ENCODE measurements at regions of chr3 and their contacts with region 1.

Region 1: GRCh38 chr3:183895296-183895695 is 10.6 kb upstream of the PARL start:
- DNase-seq: peak; percentile 48 to 55
- H3K4me3 ChIP-seq: no peak overlapping the region
- H3K27ac ChIP-seq: no peak overlapping the region
- H3K4me1 ChIP-seq: no peaks in the 10 kb centered on the region
- H3K27me3 ChIP-seq: no peaks in the 10 kb centered on the region
- CTCF ChIP-seq: peak; percentile 97

Region 2: DNA sequence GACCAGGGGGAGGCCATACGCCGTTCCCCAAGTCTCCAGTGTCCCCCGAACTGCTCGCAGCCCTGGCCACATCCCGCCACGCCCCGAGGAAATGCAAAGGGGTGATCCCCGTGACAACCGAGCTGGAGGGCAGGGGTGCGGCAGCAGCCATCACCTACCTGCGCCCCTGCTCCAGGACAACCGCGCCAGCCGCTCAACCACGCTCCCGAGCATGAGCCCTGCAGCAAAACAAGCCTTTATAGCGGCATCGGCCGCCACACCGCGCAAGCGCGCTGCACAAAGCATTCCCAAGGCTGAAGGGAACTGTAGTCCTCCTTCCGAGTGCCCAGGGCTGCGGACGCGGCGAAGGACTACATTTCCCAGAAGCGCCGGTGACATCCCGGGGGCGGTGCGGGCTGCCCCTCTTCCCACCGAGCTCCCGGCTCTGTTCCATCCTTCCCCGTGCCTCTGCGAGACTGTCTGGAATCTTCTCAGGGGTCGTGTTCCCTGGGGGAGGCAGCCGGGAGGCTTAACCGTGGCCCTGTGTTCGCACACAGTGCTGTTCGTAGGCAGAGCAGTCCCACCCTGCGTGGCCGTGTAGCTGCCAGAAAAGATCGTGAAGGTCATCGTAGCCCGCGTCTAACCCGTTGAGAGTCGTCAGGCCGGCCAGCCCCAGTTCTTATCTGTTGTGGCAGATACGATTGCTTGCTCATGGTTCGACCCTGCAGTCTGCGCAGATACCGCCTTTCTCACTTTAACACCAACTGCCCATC is 122.6 kb after region 1 on chr3 and contains the start of gene ABCC5:
- CTCF ChIA-PET with region 1: interaction called, 5 read pairs
- POLR2A ChIA-PET with region 1: no interaction called
- intact Hi-C with region 1: loop called (anchors 1 kb)
- DNase-seq: peak; percentile 87 to 94
- H3K4me3 ChIP-seq: peak within 1 kb of the TSS; percentile 99
- H3K27ac ChIP-seq: peak within 1 kb of the TSS; percentile 58
- H3K4me1 ChIP-seq: peaks cover 34% of the 10 kb centered on the region
- H3K27me3 ChIP-seq: no peaks in the 10 kb centered on the region
- CTCF ChIP-seq: peak; percentile 83
- total RNA-seq, gene ABCC5: 133 and 151 TPM in 2 replicates

Region 3: DNA sequence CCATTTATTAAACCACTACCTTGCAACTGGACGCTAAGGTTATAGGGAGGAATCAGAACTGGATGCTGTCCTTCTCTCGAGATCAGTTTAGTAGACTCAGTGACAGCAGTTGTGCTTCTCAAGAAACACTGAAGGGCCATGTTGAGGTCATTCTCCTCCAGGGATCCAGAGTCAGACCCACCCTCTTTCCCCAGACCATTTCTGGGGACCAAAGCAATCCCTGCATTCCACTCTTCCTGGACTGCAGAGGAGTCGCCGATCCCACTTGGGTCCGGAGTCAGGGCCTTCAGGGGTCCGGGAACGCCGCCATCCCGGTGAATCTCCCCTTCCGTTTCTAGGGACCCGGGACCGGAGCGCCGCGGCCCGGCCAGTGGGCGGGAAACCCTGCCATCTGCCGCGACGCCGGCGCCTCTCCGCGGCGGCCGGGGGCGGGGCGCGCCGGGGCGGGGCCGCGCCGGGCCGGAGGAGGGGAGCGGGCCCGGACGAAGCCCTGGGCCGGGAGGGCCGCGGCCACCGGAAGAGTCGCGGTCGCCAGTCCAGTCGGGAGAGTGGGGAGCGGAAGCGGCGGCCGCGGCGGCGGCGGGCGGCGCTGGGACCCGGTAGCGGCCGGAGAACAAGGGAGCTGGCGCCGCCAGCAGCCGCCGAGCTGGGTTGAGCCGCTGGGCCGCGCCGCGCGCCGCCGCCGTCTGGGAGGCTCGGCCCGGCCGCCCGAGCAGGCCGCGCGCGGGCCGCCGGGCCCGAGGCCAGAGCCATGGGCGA is 259.8 kb after region 1 on chr3 and contains the start of gene DVL3:
- CTCF ChIA-PET with region 1: interaction called, 4 read pairs
- POLR2A ChIA-PET with region 1: no interaction called
- intact Hi-C with region 1: loop called (anchors 1 kb)
- DNase-seq: peak in 1 of 2 experiments; percentile 84
- H3K4me3 ChIP-seq: peak within 1 kb of the TSS; percentile 97
- H3K27ac ChIP-seq: peak within 1 kb of the TSS; percentile 63
- H3K4me1 ChIP-seq: peaks cover 26% of the 10 kb centered on the region
- H3K27me3 ChIP-seq: no peaks in the 10 kb centered on the region
- CTCF ChIP-seq: no peak
- total RNA-seq, gene DVL3: 101 and 108 TPM in 2 replicates

Region 4: DNA sequence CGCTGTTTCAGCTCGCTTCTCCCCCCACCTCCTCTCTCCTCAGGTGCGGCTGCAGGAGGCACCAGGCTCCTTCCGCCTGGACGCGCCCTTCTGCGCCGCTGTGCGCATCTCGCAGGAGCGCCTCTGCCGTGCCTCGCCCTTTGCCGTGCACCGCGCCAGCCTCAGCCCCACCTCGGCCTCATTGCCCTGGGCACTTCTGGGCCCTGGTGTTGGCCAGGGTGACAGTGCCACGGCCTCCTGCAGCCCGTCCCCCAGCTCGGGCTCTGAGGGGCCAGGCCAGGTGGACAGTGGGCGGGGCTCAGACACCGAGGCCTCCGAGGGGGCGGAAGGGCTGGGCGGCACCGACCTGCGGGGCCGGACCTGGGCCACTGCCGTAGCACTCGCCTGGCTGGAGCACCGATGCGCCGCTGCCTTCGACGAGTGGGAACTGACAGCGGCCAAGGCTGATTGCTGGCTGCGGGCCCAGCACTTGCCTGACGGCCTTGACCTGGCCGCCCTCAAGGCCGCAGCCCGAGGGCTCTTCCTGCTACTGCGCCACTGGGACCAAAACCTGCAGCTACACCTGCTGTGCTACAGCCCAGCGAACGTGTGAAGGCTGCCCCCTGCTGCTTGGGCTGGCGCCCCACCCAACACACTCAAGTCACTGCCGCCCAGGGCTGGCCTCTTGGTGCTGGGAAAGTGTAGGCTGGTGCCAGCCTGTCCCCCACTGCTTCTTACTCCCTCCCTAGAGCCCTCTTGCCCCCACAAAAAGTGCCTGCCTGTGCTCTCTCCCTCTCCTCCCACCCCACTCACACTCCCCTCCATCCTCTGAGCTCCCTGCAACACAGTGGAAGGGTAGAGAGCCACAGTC is 346.4 kb after region 1 on chr3:
- CTCF ChIA-PET with region 1: no interaction called
- POLR2A ChIA-PET with region 1: interaction called, 4 read pairs
- intact Hi-C with region 1: loop called (anchors 1 kb)
- DNase-seq: peak; percentile 72 to 94
- H3K4me3 ChIP-seq: no peak overlapping the region; the same call in 1 of the 2 replicates
- H3K27ac ChIP-seq: no peak overlapping the region
- H3K4me1 ChIP-seq: 0 out of 2 replicates have a peak, but pooled peaks cover 7% of the 10 kb centered on the region
- H3K27me3 ChIP-seq: no peaks in the 10 kb centered on the region
- CTCF ChIP-seq: peak; percentile 70

Region 5: DNA sequence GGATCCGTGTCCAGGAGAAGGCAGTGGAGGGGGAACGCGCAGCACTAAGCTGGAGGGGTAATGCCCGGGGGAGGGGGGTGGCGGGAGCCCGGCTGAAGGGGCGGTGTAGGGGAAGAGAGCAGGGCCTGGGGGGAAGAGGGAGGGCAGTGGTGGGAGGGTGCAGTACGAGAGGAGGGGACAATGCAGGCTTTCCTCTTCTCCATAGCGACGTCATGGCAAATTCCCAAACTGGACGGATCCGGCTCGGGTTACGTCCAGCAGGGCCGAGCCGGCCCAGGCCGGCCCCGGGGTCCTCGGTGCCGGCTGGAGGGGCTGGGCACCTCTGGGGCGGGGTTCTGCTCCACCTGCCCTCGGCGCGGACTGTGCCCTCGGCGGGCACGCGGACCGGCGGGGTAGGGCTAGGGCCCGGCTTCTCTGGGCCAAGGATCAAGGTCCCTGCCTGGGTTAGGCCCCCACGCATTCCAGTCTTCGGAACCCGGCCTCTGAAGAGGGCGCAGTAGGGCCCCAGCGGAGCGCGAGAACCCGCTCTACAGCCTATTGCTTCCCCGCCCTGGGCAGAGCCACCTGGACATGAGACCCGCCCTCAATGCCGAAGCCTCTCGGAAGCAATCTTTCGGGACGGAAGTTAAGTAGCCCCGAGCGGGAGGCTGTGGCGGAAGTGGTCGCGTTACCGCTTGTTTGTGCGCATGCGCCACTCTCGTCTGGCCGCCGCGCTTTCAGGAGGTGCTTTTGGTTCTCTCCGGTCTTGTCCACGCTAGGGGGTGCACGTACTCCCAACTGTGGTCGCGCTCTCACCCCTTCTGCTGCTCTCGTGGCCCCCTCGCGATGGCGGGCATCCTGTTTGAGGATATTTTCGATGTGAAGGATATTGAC is 467.6 kb after region 1 on chr3:
- CTCF ChIA-PET with region 1: interaction called, 17 read pairs
- POLR2A ChIA-PET with region 1: no interaction called
- intact Hi-C with region 1: no loop called
- DNase-seq: peak; percentile 99
- H3K4me3 ChIP-seq: peak overlapping the region; percentile 85
- H3K27ac ChIP-seq: peak overlapping the region; percentile 95
- H3K4me1 ChIP-seq: peaks cover 22% of the 10 kb centered on the region
- H3K27me3 ChIP-seq: no peaks in the 10 kb centered on the region
- CTCF ChIP-seq: peak; percentile 73

Measured in PC-9 (cell line).